ENCODE measurements at regions of chrX and their contacts with region 1.

Region 1: DNA sequence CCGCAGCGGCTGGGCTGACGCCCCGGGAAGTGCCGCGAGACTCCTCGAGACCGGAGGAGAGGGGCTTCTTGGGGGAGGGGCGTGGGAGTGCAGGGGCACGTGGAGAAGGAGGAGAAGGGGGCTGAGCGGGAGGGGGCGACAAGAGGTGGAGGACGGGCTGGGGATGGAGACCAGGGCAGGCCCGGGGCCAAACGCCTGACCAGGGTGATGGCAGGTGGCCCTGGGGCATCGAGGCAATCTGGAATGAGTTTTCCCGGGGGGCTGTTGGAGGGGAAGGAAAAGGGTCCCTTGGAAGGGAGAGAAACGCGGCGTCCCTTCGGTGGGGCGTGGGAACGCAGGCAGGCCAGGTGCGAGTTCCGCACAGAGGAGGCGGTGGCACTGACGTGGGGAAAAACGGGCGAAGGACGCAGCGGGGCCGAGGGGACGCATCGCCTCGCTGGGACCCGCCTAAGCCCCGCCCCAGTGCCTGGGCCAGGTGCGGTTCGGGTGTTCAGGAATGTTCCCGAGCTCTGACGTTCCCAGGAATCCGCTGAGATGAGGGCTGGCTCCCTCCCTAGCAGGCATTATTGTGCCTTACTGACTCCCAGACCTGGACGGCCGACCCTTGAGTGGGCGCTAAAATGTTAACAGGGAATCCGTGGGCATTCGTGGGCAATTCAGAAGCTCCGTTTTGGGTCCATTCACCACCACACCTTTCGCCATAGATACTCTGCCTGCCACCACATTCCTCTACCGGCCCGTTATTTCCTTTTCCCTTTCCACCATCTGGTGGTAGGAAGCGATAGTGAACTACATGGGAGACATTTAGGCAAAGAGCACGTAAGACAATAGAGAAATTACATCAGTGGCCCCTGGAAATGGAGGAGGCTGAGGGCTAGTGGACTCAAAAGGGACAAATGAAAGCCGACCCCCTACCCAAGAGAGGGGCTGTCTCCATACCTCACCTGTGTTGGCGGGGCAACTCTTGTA is 795 bp upstream of the SH3KBP1 start:
- DNase-seq: peak; percentile 13
- H3K4me3 Mint-ChIP-seq: peak overlapping the region; percentile 74
- H3K27ac Mint-ChIP-seq: peak overlapping the region; percentile 55
- H3K4me1 Mint-ChIP-seq: peaks cover 36% of the 10 kb centered on the region
- H3K27me3 Mint-ChIP-seq: no peaks in the 10 kb centered on the region

Region 2: DNA sequence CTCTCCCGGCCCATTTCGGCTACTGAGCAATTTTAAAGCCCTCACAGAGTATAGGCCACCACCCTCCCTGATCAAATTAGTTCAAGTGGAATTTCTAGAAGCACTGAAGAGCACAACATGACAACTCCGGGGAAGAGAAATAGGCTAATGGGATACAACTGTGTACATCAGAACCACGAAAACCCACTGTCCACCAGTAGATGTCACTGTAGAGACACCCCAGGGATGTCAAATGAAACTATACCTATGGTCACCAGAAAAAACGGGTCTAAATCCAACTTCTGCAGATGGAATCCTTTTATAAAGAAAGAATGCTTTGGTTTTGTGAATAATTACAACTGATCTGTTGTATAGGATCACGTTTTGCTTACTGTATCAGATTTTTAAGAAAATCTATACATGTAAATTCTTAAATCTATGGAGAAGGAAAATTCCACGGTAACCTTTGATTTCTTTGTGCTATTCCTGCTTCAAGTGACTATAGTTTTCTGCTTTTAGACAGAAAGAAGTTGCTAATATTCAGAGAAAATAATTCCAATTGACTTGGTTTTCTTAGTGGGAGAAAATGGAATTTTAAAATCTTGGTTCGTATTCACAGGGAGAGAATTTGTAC is 343.4 kb before region 1 on chrX:
- intact Hi-C with region 1: loop called (anchors 5 kb)
- DNase-seq: no peak
- H3K4me3 Mint-ChIP-seq: no peak overlapping the region
- H3K27ac Mint-ChIP-seq: peak overlapping the region; percentile 70
- H3K4me1 Mint-ChIP-seq: peaks cover 19% of the 10 kb centered on the region
- H3K27me3 Mint-ChIP-seq: no peaks in the 10 kb centered on the region

Region 3: DNA sequence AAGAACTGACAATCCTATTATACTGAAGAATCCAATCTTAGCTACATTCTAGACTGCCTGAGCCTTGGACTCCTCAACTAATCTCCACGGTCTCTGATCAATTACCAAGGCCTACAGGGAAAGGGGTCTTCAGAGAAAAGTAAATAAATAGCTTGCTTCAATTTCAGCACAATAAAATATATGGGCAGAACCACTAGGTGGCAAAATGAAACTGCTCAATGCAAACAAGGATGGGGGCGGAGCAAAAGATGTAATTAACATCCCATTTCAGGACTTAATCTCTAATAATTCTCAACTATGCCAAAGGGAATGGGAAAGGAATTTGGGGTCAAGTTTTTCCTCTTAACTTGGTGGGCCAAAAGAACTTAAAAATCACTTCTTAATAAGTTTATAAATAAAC is 294.5 kb before region 1 on chrX:
- intact Hi-C with region 1: loop called (anchors 1 kb)
- DNase-seq: no peak
- H3K4me3 Mint-ChIP-seq: no peak overlapping the region
- H3K27ac Mint-ChIP-seq: peak overlapping the region; percentile 12
- H3K4me1 Mint-ChIP-seq: peaks cover 15% of the 10 kb centered on the region
- H3K27me3 Mint-ChIP-seq: no peaks in the 10 kb centered on the region

Region 4: GRCh38 chrX:19739683-19740082 is 148.5 kb before region 1 on chrX:
- intact Hi-C with region 1: loop called (anchors 2 kb)
- DNase-seq: peak; percentile 22
- H3K4me3 Mint-ChIP-seq: no peak overlapping the region
- H3K27ac Mint-ChIP-seq: no peak overlapping the region
- H3K4me1 Mint-ChIP-seq: peaks cover 53% of the 10 kb centered on the region
- H3K27me3 Mint-ChIP-seq: no peaks in the 10 kb centered on the region

Region 5: GRCh38 chrX:19799319-19800182 is 88.6 kb before region 1 on chrX:
- intact Hi-C with region 1: loop called (anchors 5 kb)
- DNase-seq: peak; percentile 28
- H3K4me3 Mint-ChIP-seq: peak overlapping the region; percentile 86
- H3K27ac Mint-ChIP-seq: peak overlapping the region; percentile 98
- H3K4me1 Mint-ChIP-seq: peaks cover 61% of the 10 kb centered on the region
- H3K27me3 Mint-ChIP-seq: no peaks in the 10 kb centered on the region

Region 6: DNA sequence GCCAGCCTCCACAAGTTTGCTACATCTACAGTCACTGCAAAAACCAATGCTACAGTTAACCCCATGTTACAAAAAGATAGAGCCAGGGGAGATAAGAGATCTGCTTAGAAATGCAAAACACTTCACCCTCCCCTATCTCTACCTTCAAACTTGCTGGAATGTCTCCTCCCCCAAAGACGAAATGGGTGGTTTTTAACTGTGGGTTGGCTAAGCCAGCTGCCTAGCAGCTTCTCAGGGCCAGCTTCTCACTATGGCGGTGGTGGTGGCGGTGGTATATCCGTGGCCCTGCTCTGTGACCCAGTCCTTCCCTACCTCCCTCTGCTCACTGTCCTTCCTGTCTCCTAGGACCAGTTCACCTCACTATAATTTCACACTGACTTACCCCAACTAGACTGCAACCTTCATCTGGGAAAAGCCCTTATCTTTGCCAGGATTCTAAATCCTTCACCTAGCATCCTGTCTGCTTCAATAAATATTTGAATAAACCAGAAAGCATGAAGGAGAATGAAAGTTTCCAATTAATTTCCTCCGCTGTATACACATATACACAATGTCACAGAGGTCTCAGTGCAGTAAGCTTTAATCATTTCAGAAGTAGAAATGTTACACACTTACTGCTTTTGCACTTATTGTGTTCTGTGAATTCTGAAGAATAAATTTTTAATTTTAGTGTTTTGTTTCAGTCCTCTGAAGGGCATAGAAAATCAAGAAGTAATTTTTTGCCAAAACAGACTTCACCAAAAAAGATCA is 47.1 kb before region 1 on chrX:
- intact Hi-C with region 1: loop called (anchors 2 kb)
- DNase-seq: peak; percentile 59
- H3K4me3 Mint-ChIP-seq: peak overlapping the region; percentile 68
- H3K27ac Mint-ChIP-seq: peak overlapping the region; percentile 94
- H3K4me1 Mint-ChIP-seq: peaks cover 48% of the 10 kb centered on the region
- H3K27me3 Mint-ChIP-seq: no peaks in the 10 kb centered on the region

Region 7: DNA sequence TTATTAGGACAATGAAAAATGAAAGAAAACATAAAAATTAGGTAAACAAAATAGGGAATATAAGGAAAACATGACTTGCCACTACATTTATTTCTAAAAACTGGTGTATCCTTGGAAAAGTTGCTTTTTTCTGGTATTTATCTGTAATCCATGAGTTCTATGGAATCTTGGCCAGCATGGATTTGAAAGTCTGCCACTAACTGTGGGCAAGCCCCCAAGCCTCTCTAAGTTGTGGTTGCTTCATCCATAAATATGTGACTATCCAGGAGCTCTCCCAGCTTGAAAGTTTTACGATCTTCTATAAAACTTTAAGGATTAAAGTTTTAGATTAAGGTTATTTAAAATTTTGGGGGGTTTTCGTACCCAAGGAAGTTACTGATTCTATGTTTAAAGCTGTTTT is 356.7 kb after region 1 on chrX:
- intact Hi-C with region 1: no loop called
- DNase-seq: no peak
- H3K4me3 Mint-ChIP-seq: no peak overlapping the region
- H3K27ac Mint-ChIP-seq: no peak overlapping the region
- H3K4me1 Mint-ChIP-seq: peaks cover 11% of the 10 kb centered on the region
- H3K27me3 Mint-ChIP-seq: no peaks in the 10 kb centered on the region